BJ (cell line): ENCODE measurements at regions of chr1 and their contacts with region 1.

Region 1: DNA sequence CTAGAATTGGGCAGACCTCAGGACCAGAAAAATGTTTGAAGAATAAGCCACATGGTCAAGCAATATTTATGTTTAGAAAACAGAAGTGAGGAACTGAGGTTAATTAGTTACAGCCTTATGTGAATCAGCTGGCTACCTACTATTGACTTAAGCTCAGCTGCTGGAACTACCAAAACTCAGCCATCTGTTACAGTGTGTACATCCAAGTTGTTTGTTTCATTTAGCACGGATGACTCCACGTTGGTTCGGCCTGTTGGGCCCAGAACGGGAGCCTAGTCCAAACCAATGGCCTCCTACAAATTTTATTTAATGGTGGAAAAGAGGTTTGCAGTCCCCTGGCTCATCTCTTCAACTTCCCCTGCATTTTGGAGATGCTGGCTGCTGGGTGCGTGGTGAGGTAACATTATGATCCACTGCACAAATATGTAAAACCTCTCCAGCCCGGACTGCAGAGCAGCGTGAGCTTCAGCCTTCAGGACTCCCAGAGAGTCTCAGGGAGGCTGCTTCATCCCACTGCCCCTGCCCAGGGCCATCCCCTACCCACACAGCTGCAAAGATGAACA is 143.4 kb downstream of the ZZZ3 start:
- DNase-seq: peak; percentile 66
- H3K4me3 ChIP-seq: no peak overlapping the region
- H3K27me3 ChIP-seq: no peaks in the 10 kb centered on the region
- CTCF ChIP-seq: no peak

Region 2: DNA sequence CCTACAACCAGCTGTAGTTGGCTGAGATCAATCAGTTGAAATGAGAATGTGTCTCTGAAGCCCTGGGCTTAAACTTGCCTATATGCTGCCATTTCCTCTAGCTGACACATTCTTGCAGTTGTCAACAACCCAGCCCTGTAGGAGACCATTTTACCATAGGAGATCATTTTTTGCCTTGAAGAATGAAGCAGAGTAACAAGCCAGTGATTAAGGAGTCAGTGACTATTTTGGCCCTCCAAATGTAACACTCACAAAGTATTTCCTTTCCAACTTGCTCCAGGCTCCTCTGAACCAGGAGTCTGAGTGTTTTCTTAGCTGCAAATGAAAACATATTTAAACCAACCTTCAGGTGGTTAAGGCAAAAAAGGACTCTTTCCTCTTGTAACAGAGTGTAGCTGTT is 40.1 kb before region 1 on chr1:
- CTCF ChIA-PET with region 1: no interaction called
- POLR2A ChIA-PET with region 1: no interaction called
- DNase-seq: no peak
- H3K4me3 ChIP-seq: no peak overlapping the region
- H3K27me3 ChIP-seq: no peaks in the 10 kb centered on the region
- CTCF ChIP-seq: no peak

Region 3: DNA sequence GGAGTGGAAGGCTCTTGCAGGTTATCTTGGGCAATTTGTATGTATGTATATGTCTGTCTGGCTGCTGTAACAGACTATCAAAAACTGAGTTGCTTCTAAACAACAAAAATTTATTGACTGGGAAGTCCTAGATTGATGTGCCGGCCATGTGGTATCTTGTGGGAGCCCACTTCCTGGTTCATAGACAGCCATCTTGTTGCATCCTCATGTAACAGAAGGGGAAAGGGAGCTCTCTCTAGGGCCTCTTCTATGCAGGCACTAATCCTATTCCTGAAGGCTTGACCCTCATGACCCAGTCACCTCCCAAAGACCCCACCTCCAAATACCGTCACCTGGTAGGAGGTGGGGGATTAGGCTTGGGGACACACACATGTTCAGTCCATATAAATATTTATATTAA is 515.9 kb after region 1 on chr1:
- CTCF ChIA-PET with region 1: no interaction called
- POLR2A ChIA-PET with region 1: interaction called, 10 read pairs
- DNase-seq: no peak
- H3K4me3 ChIP-seq: no peak overlapping the region
- H3K27me3 ChIP-seq: no peaks in the 10 kb centered on the region
- CTCF ChIP-seq: no peak

Region 4: DNA sequence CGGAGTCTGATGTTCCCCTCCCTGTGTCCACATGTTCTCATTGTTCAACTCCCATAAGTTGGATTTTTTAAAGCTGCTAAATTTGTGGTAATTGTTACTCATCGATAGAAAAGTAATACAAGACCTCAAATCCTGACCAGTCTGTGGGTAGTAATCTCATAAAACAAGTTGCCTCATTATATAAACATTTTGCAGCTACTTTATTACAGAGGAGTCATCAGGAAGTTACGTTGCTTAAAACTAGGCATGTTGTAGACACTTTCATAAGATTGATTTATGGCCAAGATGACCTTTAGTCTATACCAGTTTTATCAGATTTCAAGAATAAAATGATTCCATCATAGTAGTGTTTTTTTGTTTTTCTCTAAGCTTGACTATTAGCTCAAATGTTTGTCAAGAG is 715.5 kb after region 1 on chr1:
- CTCF ChIA-PET with region 1: no interaction called
- POLR2A ChIA-PET with region 1: no interaction called
- DNase-seq: peak; percentile 66
- H3K4me3 ChIP-seq: no peak overlapping the region
- H3K27me3 ChIP-seq: peaks cover 11% of the 10 kb centered on the region
- CTCF ChIP-seq: no peak